AG04449 (cell line): ENCODE measurements at regions of chr2 and their contacts with region 1.

Region 1: GRCh38 chr2:64523666-64524603 is at the start of gene AFTPH:
- DNase-seq: peak; percentile 87
- H3K4me3 ChIP-seq: peak within 1 kb of the TSS; percentile 91
- CTCF ChIP-seq: no peak

Region 2: GRCh38 chr2:64488050-64488974 is 35.6 kb before region 1 on chr2:
- CTCF ChIA-PET with region 1: interaction called, 13 read pairs
- POLR2A ChIA-PET with region 1: no interaction called
- DNase-seq: no peak
- H3K4me3 ChIP-seq: no peak overlapping the region
- CTCF ChIP-seq: peak; percentile 83

Region 3: DNA sequence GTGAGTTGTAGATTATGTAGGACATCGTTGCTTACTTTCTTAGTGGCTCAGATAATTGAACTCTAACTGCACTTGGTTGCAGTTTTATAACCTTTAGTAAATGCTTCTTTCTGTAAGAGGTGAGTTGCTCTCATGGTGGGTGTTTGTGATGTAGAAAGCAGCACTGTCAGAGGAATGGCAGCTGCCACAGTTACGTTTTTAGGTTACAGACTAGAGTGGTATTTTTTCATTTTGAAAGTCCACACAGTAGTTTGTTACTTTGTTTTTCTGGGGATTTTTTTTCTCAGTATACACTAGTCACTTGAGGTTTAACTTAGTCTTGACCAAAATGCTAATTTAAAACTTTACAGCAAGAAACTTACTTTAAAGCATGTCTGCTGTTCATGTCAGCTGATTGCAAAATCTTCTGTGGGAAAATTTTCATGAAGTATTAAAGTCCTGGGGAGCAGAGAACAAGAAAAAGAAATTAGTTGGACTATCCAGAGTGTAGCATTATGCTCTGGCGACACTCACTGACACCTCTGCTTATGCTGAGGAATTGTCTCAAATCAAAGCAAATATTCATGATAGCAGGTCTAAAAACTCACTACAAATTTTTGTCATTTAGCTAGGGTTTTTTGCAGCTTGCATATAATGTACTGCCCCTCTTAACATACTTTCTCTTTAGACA is 15.0 kb after region 1 on chr2:
- CTCF ChIA-PET with region 1: interaction called, 28 read pairs
- POLR2A ChIA-PET with region 1: no interaction called
- DNase-seq: no peak
- H3K4me3 ChIP-seq: no peak overlapping the region
- CTCF ChIP-seq: no peak

Region 4: DNA sequence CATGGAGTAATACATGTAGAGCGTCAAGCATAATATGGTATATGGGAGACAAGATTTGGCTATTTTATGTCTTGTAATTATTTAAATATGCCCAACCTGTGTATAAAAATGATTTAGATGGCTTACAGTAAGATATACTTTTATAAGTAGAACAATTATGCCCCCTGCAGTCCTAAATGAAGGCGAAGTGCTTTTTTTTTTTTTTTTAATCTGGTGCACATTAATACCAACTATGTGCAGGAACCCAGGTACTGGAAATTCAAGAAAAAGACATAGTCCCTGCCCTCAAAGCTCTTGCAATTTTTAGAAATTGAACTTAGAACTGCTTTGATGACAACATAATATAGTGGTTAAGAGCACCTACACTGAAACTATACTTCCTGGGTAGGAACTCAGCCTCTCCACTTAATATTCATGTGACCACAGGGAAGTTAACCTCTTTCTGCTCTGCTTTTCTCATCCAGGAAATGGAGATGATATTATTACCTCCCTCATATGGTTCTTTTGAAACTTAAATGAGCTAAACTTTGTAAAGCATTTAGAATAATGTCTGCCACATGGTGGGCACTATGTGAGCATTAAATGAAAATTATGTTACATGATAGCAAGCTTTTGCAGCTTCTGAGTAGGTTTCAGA is 38.3 kb after region 1 on chr2:
- CTCF ChIA-PET with region 1: interaction called, 137 read pairs
- POLR2A ChIA-PET with region 1: interaction called, 5 read pairs
- DNase-seq: no peak
- H3K4me3 ChIP-seq: no peak overlapping the region
- CTCF ChIP-seq: peak; percentile 15

Region 5: DNA sequence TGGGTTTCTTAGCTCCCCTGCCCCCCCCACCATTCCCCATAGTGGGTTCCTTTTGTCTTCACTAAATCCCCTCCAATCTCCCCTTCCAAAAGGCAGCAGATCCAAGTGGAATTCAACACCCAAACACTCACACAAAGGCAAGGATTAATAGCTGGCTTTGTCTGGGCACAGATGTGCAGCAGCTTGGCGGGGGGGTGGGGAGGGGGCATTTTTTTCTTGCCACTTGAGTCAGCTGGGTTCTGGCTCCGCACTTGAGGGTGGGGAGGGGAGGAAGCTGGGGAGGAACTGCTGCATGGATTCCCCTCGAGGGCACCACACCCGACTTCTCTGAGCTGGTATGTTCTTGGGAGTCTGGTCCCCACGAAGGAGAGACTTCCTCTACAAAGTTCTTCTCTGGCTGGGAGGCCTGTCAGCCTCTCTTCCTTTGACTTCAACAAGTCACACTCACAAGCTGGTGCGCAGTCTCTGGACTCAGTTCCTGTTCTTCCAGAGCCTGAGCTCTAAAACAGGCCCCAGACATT is 93.8 kb after region 1 on chr2:
- CTCF ChIA-PET with region 1: no interaction called
- POLR2A ChIA-PET with region 1: no interaction called
- DNase-seq: no peak
- H3K4me3 ChIP-seq: no peak overlapping the region
- CTCF ChIP-seq: no peak

Region 6: GRCh38 chr2:64873472-64873924 is 349.6 kb after region 1 on chr2:
- CTCF ChIA-PET with region 1: interaction called, 18 read pairs
- POLR2A ChIA-PET with region 1: no interaction called
- DNase-seq: no peak
- H3K4me3 ChIP-seq: no peak overlapping the region; the same call in 1 of the 2 replicates
- CTCF ChIP-seq: peak; percentile 97